Ascending aorta (tissue), 2 donors: ENCODE measurements at regions of chr5 and their contacts with region 1.

Region 1: GRCh38 chr5:6644662-6645275 is 11.5 kb downstream of the SRD5A1 start:
- DNase-seq: no peak
- H3K4me3 ChIP-seq: no peak overlapping the region
- H3K27ac ChIP-seq: no peak overlapping the region
- H3K4me1 ChIP-seq: no peaks in the 10 kb centered on the region
- H3K27me3 ChIP-seq: no peaks in the 10 kb centered on the region
- CTCF ChIP-seq: no peak

Region 2: GRCh38 chr5:6675763-6676499 is 31.2 kb after region 1 on chr5:
- intact Hi-C with region 1: loop called (anchors 5 kb)
- DNase-seq: no peak
- H3K4me3 ChIP-seq: no peak overlapping the region
- H3K27ac ChIP-seq: no peak overlapping the region
- H3K4me1 ChIP-seq: no peaks in the 10 kb centered on the region
- H3K27me3 ChIP-seq: no peaks in the 10 kb centered on the region
- CTCF ChIP-seq: no peak